Left colon (tissue), 2 donors: ENCODE measurements at regions of chr7 and their contacts with region 1.

Region 1: GRCh38 chr7:135795846-135796570 is 47.4 kb upstream of the FAM180A start:
- DNase-seq: no peak
- ATAC-seq: no peak

Region 2: GRCh38 chr7:135634191-135634878 is 161.7 kb before region 1 on chr7:
- intact Hi-C with region 1: no loop called
- DNase-seq: no peak
- ATAC-seq: no peak

Region 3: DNA sequence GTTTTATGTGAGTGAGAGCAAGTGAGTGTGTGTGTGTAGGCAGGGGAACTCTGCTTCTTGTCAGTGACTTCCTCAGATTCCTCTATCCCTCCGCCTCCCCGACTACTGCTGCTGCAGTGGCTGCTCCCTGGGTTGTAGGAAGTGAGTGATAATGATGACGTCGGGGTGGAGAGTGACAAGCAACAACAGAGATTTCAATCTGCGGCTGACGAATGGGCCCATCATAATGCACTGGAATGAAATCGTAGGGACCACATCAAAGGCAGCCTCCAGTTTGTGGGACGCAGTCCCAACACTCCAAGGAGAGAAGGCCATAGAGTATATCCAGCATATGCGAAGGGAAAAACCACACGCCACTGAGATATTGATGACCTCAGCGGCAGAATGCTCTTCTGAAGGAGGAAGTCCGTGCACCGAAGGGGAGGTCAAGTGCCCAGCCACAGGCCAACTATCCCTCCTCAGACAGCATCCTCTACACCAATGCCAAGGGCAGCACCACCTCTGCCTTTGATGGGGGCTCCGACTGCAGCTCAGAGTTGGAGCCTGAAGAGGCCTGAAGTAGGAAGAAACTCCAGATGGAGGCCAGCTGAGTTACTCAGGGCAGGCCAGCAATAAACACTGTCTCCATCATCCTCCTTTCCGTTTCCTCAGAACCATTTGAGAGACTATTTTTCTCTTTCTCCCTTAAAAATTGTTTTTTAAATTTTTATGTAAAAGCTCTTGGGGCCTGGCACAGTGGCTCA is 145.0 kb before region 1 on chr7:
- intact Hi-C with region 1: no loop called
- DNase-seq: peak in 1 of 2 donors; percentile 30
- ATAC-seq: no peak

Region 4: DNA sequence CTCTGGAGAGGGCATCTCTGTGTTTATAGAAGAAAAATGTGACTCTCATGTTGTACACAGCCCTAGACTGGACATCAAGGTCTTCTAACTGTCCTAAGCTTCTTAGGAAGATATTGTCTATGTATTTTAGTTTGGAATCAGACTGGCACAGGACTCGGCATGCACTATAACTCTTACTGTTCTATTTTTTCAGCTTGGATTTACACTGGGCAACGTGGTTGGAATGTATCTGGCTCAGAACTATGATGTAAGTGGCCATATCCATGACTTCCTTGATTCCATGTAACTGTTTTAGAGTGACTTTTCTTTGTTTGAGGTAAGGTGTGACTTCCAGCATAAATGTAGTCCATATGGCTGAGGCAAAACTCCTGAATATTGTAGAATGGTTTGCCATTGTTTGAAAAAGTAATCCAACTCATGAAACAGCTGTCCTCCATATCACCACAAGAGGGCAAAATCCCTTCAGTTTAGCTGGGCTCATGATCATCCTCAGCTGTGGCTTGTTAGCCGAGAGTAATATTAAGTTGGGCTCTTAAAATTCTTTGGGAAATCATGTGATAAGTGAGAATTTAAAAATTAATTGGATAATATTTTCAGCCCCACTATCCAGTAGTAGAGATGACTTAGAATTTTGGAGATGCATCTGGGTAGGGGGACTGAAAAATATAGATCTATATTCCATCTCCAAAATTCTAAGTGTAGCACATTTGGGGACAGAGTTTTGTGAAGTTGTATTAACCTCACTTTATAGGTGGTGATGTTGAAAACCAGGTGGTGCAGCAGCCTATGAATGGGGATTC is 123.2 kb before region 1 on chr7:
- intact Hi-C with region 1: loop called in 1 of 2 experiments (anchors 10 kb)
- DNase-seq: no peak
- ATAC-seq: peak; percentile 72

Region 5: GRCh38 chr7:135716677-135717238 is 79.2 kb before region 1 on chr7:
- intact Hi-C with region 1: no loop called
- DNase-seq: no peak
- ATAC-seq: no peak